Dendritic cell treated with granulocyte-macrophage colony-stimulating factor and Interleukin-4, amounts not matched to agents 40 ng/mL and 50 ng/mL, for 4 days (primary cell): ENCODE measurements at regions of chrX and their contacts with region 1.

Region 1: GRCh38 chrX:135484641-135485289 is 35.7 kb upstream of the INTS6L start:
- H3K4me3 Mint-ChIP-seq: no peak overlapping the region
- H3K27ac Mint-ChIP-seq: no peak overlapping the region
- H3K4me1 Mint-ChIP-seq: no peaks in the 10 kb centered on the region
- H3K27me3 Mint-ChIP-seq: no peaks in the 10 kb centered on the region

Region 2: DNA sequence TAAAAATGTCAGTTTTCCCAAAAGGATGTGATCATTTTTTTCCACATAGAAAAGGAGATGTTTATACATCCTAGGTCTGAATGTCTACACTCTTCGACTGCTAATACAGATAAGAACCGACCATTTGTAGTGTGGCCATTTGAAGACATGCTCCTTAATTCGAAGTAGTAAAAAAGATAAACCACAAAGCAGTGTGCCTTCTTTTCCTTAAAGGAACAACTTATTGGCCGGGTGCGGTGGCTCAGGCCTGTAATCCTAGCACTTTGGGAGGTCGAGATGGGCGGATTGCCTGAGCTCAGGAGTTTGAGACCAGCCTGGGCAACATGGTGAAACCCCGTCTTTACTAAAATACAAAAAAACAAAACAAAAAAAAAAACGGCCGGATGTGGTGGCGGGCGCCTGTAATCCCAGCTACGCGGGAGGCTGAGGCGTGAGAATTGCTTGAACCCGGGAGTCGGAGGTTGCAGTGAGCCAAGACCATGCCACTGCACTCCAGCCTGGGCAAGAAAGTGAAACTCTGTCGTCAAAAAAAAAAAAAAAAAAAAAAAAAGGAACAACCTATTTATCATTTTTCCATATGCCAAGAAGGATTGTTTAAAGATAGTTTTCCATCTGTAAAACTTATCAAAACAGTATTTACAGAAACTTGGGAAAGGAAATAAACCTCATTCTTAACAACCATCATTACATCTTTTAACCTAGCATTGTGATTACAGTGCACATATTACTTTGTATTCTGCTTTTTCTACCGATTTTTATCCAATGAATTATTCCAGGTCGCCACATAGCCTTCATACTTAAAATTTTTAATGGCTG is 38.3 kb after region 1 on chrX:
- intact Hi-C with region 1: no loop called
- H3K4me3 Mint-ChIP-seq: peak overlapping the region; percentile 85
- H3K27ac Mint-ChIP-seq: peak overlapping the region; percentile 99
- H3K4me1 Mint-ChIP-seq: peaks cover 7% of the 10 kb centered on the region
- H3K27me3 Mint-ChIP-seq: no peaks in the 10 kb centered on the region

Region 3: DNA sequence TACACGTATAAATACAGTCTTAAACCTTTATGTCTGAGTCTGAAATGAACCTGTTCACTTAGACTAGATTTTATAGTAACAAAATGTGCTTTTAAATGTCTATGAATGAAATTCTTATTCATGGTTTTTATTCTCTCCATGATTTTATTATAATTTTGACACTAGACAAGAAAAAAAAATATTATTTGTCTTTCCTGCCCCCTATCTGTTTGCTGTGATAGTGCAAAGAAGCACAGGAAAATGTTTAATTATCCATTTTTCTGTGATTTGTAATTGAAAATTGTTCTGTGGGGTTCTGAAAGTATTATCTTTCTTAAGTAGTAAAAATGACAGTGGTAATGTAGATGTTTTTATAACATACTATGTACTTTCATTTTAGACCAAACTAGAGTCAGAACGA is 87.7 kb after region 1 on chrX:
- intact Hi-C with region 1: loop called (anchors 2 kb)
- H3K4me3 Mint-ChIP-seq: no peak overlapping the region
- H3K27ac Mint-ChIP-seq: no peak overlapping the region
- H3K4me1 Mint-ChIP-seq: no peaks in the 10 kb centered on the region
- H3K27me3 Mint-ChIP-seq: no peaks in the 10 kb centered on the region

Region 4: GRCh38 chrX:135596495-135596894 is 111.7 kb after region 1 on chrX:
- intact Hi-C with region 1: loop called (anchors 1 kb)
- H3K4me3 Mint-ChIP-seq: no peak overlapping the region
- H3K27ac Mint-ChIP-seq: no peak overlapping the region
- H3K4me1 Mint-ChIP-seq: no peaks in the 10 kb centered on the region
- H3K27me3 Mint-ChIP-seq: peaks cover 5% of the 10 kb centered on the region